Head of caudate nucleus (tissue), 42 donors: ENCODE measurements at regions of chr2 and their contacts with region 1.

Region 1: DNA sequence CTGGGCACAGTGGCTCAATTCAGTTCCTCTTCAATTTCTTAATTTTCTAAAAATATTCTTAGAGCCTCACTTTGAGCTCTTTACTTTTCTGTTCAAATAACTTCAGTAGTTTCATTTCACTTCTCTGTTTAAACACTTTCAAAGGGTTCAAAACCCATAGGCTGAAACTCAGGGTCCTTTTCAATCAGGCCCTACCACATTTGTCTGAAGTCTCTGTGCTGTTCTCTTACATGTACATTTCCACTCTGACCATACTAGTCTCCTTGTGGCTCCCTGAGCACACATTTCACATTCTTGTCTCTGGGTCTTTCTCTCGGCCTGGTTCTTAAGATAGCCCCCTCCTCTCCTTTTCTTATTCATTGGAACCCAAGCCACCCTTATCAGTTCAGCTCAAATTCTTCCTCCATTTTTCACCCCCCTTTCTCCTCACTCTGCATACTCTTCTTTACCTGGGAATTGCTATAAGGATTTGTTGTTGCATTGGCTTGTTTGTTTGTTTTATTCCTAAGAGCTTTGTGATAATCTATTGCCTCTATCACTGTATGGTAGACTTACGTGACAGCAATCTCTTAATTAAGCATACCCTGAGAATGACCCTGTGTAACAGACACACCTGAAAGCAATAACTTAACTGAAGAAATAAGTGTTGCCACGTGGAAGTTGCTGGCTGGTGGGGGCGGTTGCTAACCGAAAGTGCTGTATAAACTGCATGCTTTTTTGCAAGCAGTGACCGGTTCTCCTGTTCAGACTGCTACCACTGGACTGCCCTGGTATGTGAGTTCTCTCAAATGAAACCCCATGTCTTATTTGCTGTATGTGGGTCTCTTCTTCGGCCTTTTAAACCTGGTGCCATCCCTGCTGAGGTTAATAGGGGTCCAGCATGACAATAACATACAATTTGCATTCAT is 27.7 kb upstream of the ACADL start:
- DNase-seq: no peak

Region 2: GRCh38 chr2:210399440-210400041 is 146.6 kb after region 1 on chr2:
- intact Hi-C with region 1: loop called (anchors 10 kb)
- DNase-seq: no peak